ENCODE measurements at regions of chr7 and their contacts with region 1.

Region 1: DNA sequence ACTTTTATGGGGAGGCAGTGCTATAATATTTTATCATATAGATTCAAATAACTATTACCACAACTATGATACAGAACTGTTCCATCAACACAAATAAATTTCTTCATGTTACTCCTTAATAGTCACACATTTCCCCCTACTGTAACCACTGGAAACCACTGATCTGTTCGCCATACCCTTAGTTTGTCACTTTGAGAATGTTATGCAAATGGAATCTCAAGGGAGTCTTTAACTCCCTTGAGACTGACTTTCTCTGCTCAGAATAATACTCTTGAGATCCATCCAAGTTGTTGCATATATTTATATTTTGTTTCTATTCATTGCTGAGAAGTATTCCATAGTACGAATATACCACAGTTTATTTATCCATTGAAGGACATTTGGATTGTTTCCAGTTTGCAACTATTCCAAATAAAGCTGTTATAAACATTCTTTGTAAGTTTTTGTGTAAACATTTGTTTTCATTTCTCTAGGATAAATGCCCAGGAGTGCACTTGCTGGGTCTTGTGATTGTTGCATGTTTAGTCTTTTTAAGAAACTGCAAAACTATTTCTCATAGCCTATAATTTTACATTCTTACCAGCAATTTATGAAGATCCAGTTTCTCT is 19.7 kb upstream of the PON2 start:
- DNase-seq: no peak
- ATAC-seq: no peak

Region 2: GRCh38 chr7:95376632-95377315 is 77.8 kb before region 1 on chr7:
- intact Hi-C with region 1: loop called (anchors 10 kb)
- DNase-seq: no peak
- ATAC-seq: no peak

Region 3: DNA sequence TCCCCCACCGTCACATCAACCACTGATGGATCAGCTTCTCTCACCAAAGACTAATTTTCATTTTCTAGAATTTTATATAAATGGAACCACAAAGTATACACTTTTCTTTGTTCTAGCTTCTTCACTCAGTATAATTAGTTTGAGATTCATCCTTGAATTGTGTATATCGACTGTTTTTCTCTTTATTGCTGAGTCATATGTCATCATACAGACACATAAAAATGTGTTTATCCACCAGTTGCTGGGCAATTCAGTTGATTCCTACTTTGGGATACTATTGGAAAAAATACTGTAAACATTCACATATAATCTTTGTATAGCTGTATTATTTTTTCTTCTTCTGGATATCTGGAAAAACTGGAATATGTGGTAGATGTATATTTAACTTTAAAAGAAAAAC is 115.2 kb after region 1 on chr7:
- intact Hi-C with region 1: no loop called
- DNase-seq: no peak
- ATAC-seq: no peak

Region 4: GRCh38 chr7:95871078-95871782 is 416.7 kb after region 1 on chr7:
- intact Hi-C with region 1: no loop called
- DNase-seq: no peak
- ATAC-seq: peak; percentile 84